Activated B cell treated with CpG ODN at 0.5 μM for 24 hours (primary cell): ENCODE measurements at regions of chr17 and their contacts with region 1.

Region 1: GRCh38 chr17:63842540-63843386 is at the start of gene SMARCD2:
- DNase-seq: peak; percentile 96
- ATAC-seq: peak; percentile 90
- H3K4me3 Mint-ChIP-seq: peak within 1 kb of the TSS; percentile 94
- H3K27ac Mint-ChIP-seq: peak within 1 kb of the TSS; percentile 95
- H3K4me1 Mint-ChIP-seq: peaks cover 49% of the 10 kb centered on the region
- H3K27me3 Mint-ChIP-seq: no peaks in the 10 kb centered on the region
- CTCF ChIP-seq: no peak
- total RNA-seq, gene SMARCD2: 114 and 117 TPM in 2 replicates

Region 2: GRCh38 chr17:63549946-63550807 is 292.6 kb before region 1 on chr17 and contains the start of gene DCAF7:
- CTCF ChIA-PET with region 1: no interaction called
- POLR2A ChIA-PET with region 1: interaction called, 15 read pairs
- intact Hi-C with region 1: loop called (anchors 2 kb)
- DNase-seq: peak; percentile 94
- ATAC-seq: peak; percentile 94
- H3K4me3 Mint-ChIP-seq: peak within 1 kb of the TSS; percentile 99
- H3K27ac Mint-ChIP-seq: peak within 1 kb of the TSS; percentile 95
- H3K4me1 Mint-ChIP-seq: peaks cover 56% of the 10 kb centered on the region
- H3K27me3 Mint-ChIP-seq: no peaks in the 10 kb centered on the region
- CTCF ChIP-seq: no peak
- total RNA-seq, gene DCAF7: 91.9 and 103 TPM in 2 replicates

Region 3: DNA sequence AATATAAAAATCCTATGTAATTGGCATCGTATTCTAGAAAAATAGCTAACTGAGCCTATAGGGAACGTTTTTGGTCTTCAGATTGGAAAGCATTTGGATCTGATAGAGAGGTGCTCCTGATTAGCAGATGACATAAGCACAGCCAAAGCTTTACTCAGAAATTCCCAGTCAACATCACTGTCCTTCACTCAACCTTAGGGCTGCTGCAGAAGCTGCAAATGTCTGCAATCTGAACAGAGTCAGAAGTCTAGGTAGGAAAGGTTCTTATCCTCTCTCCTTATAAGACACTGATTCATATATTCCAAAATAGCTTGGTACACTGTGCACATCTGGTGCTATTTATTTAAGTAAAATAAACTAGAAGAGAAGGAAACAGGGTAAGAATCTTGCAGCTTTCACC is 120.4 kb before region 1 on chr17:
- CTCF ChIA-PET with region 1: no interaction called
- POLR2A ChIA-PET with region 1: no interaction called
- intact Hi-C with region 1: no loop called
- DNase-seq: no peak
- ATAC-seq: no peak
- H3K4me3 Mint-ChIP-seq: no peak overlapping the region
- H3K27ac Mint-ChIP-seq: no peak overlapping the region
- H3K4me1 Mint-ChIP-seq: no peaks in the 10 kb centered on the region
- H3K27me3 Mint-ChIP-seq: no peaks in the 10 kb centered on the region
- CTCF ChIP-seq: no peak

Region 4: GRCh38 chr17:63827002-63827771 is 15.6 kb before region 1 on chr17 and contains the starts of genes FTSJ3 and PSMC5:
- CTCF ChIA-PET with region 1: interaction called, 4 read pairs
- POLR2A ChIA-PET with region 1: interaction called, 112 read pairs
- intact Hi-C with region 1: loop called (anchors 1 kb)
- DNase-seq: peak; percentile 90
- ATAC-seq: peak; percentile 95
- H3K4me3 Mint-ChIP-seq: peak within 1 kb of the TSS; percentile 98
- H3K27ac Mint-ChIP-seq: peak within 1 kb of the TSS; percentile 100
- H3K4me1 Mint-ChIP-seq: peaks cover 75% of the 10 kb centered on the region
- H3K27me3 Mint-ChIP-seq: no peaks in the 10 kb centered on the region
- CTCF ChIP-seq: no peak
- total RNA-seq, gene FTSJ3: 82.0 and 85.1 TPM in 2 replicates
- total RNA-seq, gene PSMC5: 157 TPM in 2 replicates

Region 5: DNA sequence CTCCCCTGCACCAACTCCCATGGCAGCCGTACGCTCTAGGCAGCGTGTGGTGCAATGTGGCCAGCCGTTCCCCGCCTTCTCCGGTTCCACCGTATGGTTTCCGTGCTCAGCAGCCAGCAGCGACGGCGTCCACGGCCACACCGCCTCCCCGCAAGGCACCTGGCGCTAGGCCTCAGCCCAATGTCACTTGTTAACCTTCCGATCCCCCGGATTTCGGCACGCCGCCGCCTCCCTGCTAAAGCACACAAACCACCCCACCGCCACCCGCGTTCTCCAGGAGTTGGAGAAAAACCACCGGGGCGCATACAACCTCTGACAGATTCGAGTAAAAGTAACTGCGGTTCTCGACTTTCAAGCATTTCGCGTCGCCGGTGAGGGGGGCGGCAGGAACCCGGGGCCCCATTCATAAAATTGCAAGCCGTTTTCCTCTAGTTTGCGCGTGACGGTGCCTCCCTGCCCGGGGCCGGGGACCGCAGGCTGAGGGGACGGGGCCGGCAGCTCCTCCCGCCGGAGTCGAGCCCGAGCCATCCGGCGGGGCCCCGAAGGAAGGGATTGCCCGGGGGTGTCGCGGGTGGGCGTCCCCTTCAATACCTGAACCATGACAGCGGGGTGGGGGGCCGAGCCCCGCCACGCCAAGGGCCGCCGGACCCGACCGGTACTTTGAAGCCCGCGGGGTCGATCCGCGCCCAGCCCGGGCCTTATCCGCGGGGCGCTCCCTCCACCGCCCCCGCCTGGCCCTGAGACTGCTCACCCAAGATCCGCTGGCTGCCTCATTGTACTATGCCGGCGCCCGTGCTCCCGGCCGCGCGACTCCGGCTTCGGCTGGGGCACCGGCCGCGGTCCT is 419.9 kb after region 1 on chr17 and contains the start of gene TEX2:
- CTCF ChIA-PET with region 1: no interaction called
- POLR2A ChIA-PET with region 1: no interaction called
- intact Hi-C with region 1: loop called (anchors 5 kb)
- DNase-seq: peak; percentile 43
- ATAC-seq: peak; percentile 25
- H3K4me3 Mint-ChIP-seq: peak within 1 kb of the TSS; percentile 88
- H3K27ac Mint-ChIP-seq: peak within 1 kb of the TSS; percentile 80
- H3K4me1 Mint-ChIP-seq: peaks cover 19% of the 10 kb centered on the region
- H3K27me3 Mint-ChIP-seq: peaks cover 10% of the 10 kb centered on the region
- CTCF ChIP-seq: no peak
- total RNA-seq, gene TEX2: 8.1 TPM in 2 replicates

Region 6: GRCh38 chr17:64406321-64407200 is 563.8 kb after region 1 on chr17:
- CTCF ChIA-PET with region 1: no interaction called
- POLR2A ChIA-PET with region 1: interaction called, 10 read pairs
- intact Hi-C with region 1: no loop called
- DNase-seq: no peak
- ATAC-seq: no peak
- H3K4me3 Mint-ChIP-seq: no peak overlapping the region
- H3K27ac Mint-ChIP-seq: peak overlapping the region; percentile 50
- H3K4me1 Mint-ChIP-seq: peaks cover 74% of the 10 kb centered on the region
- H3K27me3 Mint-ChIP-seq: no peaks in the 10 kb centered on the region
- CTCF ChIP-seq: no peak